ENCODE measurements at regions of chr21 and their contacts with region 1.

Region 1: DNA sequence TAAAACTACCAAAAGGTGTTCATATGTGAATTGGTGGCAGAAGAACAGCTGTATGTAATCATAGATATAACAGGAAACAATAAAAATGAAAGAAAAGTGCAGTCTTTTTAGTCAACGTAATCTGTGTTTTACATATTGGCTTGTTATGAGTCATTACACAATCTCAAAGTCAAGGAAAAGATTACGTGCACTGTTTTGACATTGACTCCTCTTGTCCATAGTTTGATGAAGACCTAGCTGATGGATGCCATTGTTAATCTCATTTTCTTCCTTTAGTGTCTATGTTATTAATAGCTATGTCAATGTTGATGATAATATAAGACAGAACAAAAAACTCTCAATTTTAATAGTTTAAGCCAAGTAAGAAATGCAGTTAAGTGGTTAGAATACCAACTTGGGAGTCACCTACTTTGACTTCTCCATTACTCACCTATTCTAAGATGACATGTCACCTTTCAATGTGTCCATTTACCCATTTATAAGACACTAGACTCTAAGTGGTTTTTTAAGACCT is 84.5 kb upstream of the SAMSN1 start:
- DNase-seq: no peak
- H3K4me3 ChIP-seq: no peak overlapping the region
- H3K27ac ChIP-seq: no peak overlapping the region
- H3K4me1 ChIP-seq: no peaks in the 10 kb centered on the region
- H3K27me3 ChIP-seq: no peaks in the 10 kb centered on the region
- CTCF ChIP-seq: no peak
- POLR2A ChIP-seq: no peak

Region 2: DNA sequence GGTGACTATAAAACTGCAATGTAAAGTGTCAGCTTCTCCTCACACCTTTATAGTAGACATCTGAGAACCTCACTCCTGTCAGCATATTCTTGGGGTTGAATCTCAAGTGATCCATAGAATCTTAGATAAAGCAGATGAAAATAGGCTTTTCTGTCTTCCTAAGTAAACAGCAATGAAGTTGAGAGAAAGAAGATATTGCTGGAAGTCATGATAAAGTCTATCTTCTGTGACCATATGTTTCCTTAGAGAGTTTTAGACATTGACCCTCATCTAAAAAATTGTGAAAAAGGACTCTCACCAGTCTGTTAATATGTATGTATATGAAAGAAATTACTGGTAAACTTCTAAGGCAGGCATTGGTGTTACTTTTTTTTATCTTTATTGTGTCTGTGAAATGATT is 486.6 kb before region 1 on chr21:
- intact Hi-C with region 1: loop called (anchors 10 kb)
- DNase-seq: no peak
- H3K4me3 ChIP-seq: no peak overlapping the region
- H3K27ac ChIP-seq: no peak overlapping the region
- H3K4me1 ChIP-seq: no peaks in the 10 kb centered on the region
- H3K27me3 ChIP-seq: no peaks in the 10 kb centered on the region
- CTCF ChIP-seq: no peak
- POLR2A ChIP-seq: no peak

Region 3: DNA sequence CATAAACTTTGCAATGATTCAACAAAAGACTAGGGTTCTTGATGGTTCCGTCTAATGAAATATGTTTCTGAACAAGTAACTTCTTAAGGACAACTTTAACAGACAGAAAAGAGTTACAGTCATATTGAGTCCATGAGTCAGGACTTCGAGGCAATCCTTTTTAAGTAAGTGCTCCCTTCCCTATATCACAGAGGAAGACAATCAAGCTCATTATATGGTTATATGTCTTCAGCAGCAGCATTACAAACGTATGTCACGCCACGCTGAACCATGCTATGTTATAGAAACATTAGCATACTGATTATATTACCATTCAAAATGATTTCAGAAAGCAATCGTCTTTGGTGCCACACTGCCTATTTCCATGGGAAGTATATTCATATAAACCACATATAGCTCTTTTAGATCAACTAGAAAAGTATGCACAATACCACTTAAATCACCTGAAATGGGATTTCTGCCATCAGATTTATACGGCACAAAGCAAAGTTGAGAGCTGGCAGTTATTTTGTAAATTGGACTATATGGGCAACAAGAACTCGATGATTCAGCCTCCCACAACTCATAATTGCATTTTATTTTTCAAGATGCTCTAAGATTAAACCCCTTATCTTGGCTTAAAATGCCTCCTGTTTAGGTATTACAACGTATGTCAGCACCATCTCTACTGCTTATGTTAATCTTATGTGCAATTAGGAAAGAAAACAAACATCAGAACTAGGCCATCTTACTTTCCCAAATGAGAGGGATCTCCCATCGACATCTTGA is 26.8 kb after region 1 on chr21:
- intact Hi-C with region 1: no loop called
- DNase-seq: no peak
- H3K4me3 ChIP-seq: no peak overlapping the region
- H3K27ac ChIP-seq: no peak overlapping the region
- H3K4me1 ChIP-seq: no peaks in the 10 kb centered on the region
- H3K27me3 ChIP-seq: no peaks in the 10 kb centered on the region
- CTCF ChIP-seq: no peak
- POLR2A ChIP-seq: no peak